GM13977 (cell line): ENCODE measurements at regions of chr5 and their contacts with region 1.

Region 1: DNA sequence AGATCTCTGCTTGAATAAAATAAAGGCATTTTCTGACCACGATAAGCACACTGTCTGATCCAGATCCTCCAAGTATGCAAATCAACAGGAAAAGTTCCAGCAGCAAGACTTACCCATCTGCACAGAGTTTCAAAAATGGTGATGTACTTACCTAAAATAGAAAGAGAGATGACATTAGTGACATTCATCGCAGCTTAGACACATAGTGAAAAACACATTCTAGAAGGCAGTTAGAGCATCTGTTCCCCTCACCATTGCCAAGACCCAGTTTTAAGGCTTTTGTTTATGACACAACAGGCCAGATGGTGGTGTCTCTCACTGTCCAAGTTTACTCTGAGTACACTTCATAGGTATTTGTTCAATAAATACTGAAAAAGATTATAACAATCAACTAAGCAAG is 207.7 kb downstream of the PDE4D start:
- DNase-seq: peak; percentile 5
- CTCF ChIP-seq: no peak

Region 2: DNA sequence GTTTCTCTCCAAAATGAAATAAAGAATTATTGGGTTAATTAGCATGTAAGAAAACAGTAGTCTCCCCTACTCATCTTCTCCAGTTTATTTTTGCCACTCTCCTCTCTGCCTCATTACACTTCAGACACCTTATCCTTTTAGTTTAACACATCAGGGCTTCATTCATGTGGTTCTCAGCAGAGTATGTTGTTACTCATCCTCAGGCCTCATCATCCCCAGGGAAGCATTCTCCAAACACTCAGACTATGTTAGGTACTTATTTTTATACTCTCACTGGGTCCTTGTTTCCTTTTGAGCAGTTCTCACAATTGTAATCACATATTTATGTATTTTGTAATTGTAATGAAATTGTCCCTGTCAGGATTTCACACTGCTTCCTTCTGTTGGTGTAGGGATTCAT is 262.8 kb before region 1 on chr5:
- in situ Hi-C with region 1: loop called (anchors 25 kb)
- DNase-seq: no peak
- CTCF ChIP-seq: no peak